Left lung (tissue), 14 donors: ENCODE measurements at regions of chr19 and their contacts with region 1.

Region 1: GRCh38 chr19:50368649-50369570 is 3.5 kb upstream of the NAPSA start:
- DNase-seq: peak; percentile 80 to 90 (median 86)
- ATAC-seq: peak; percentile 80
- H3K4me3 ChIP-seq: peak overlapping the region; percentile 56 to 65
- H3K27ac ChIP-seq: peak overlapping the region; percentile 82 to 87
- H3K4me1 ChIP-seq: peaks cover 0 to 5% of the 10 kb centered on the region in 2 donors
- H3K27me3 ChIP-seq: no peaks in the 10 kb centered on the region
- CTCF ChIP-seq: peak; percentile 84 to 92

Region 2: GRCh38 chr19:50280074-50280473 is 88.8 kb before region 1 on chr19:
- intact Hi-C with region 1: no loop called
- DNase-seq: no peak
- ATAC-seq: no peak
- H3K4me3 ChIP-seq: no peak overlapping the region
- H3K27ac ChIP-seq: no peak overlapping the region
- H3K4me1 ChIP-seq: no peaks in the 10 kb centered on the region
- H3K27me3 ChIP-seq: no peaks in the 10 kb centered on the region
- CTCF ChIP-seq: no peak

Region 3: GRCh38 chr19:50414864-50415660 is 46.2 kb after region 1 on chr19:
- intact Hi-C with region 1: loop called in 1 of 2 experiments (anchors 10 kb)
- DNase-seq: peak; percentile 33 to 96 (median 74)
- ATAC-seq: peak; percentile 92
- H3K4me3 ChIP-seq: peak overlapping the region in 1 of 2 donors; percentile 17
- H3K27ac ChIP-seq: no peak overlapping the region
- H3K4me1 ChIP-seq: peaks cover 0 to 32% of the 10 kb centered on the region in 2 donors
- H3K27me3 ChIP-seq: peaks cover 18 to 32% of the 10 kb centered on the region in 2 donors
- CTCF ChIP-seq: peak; percentile 90 to 94

Region 4: DNA sequence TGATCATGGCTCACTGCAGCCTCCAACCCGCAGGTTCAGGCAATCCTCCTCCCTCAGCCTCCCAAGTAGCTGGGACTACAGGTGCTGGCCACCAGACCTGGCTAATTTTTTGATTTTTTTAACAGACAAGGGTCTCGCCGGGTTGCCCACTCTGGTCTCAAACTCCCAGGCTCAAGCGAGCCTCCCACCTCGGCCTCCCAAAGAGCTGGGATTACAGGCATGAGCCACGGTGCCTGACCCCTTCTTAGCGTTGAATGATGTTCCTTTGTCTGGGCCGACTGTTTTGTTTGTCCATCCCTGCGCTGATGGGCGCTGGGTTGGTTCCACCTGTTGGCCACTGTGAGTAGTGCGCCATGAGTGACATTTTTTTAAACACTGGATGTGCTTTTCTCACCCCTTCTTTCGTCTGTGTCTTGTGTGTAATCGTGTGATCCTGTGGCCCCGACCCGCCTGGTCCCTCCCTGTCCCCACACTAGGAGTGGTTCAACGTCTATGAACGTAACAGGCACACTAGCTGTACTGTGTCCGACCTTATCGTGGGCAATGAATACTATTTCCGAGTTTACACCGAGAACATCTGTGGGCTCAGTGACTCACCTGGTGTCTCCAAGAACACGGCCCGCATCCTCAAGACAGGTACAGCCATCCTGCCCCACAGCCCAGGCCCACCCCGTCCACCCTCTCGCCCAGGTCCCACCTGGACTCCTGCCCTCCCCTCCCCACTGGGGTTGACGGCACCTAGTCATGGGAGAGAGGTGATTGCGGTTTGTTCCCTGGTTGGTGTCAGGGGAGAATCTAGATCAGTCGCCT is 92.4 kb after region 1 on chr19:
- intact Hi-C with region 1: loop called in 1 of 2 experiments (anchors 5 kb)
- DNase-seq: peak in 3 of 4 donors; percentile 51 to 75 (median 67)
- ATAC-seq: peak; percentile 94
- H3K4me3 ChIP-seq: no peak overlapping the region
- H3K27ac ChIP-seq: no peak overlapping the region
- H3K4me1 ChIP-seq: no peaks in the 10 kb centered on the region
- H3K27me3 ChIP-seq: peaks cover 19 to 61% of the 10 kb centered on the region in 2 donors
- CTCF ChIP-seq: peak; percentile 73 to 80

Region 5: GRCh38 chr19:50779504-50780457 is 410.9 kb after region 1 on chr19:
- intact Hi-C with region 1: loop called in 1 of 2 experiments (anchors 10 kb)
- DNase-seq: no peak
- ATAC-seq: no peak
- H3K4me3 ChIP-seq: no peak overlapping the region
- H3K27ac ChIP-seq: no peak overlapping the region
- H3K4me1 ChIP-seq: peaks cover 0 to 8% of the 10 kb centered on the region in 2 donors
- H3K27me3 ChIP-seq: peaks cover 32 to 87% of the 10 kb centered on the region in 2 donors
- CTCF ChIP-seq: no peak